ENCODE measurements at regions of chr14 and their contacts with region 1.

Region 1: DNA sequence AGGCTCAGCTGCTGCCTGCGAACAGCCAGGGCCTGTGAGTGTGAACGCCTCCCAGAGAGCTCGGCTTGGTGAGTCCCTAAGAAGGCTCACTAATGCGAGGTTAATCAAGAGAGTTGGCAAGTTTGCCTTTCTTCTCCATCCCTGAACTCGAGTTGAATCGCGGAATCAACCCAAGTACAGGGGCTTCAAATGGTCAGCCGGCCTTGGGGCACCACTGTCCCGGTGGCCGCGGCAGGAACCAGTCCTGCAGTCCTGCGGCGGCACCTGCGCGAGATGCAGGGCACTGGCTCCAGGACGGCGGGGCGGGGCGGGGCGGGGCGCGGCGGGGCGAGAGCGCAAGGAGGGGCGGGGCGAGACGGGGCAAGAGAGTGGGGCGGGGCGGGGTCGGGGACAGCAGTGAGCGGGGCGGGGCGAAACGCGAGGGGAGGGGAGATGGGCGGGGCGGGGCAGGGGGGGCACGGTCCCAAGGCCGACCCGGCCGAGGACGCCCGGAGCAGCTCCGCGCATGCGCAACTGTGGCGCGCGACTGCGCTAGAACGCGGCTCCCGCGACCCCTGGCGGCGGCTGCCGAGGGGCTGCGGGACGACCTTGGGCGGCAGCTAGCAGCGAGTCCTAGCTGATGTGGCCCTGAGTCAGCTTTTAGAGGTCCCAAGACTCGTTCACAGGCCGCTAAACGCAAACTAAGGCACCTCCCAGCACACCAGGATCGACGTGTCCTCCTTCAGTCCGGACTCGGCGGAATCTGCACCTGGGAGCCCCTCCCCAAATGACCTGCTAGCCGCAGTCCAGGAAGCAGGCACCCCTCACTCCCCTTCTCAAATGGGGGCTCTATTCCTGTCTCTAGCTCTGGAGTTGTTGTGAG is 58.0 kb downstream of the TTC7B start:
- DNase-seq: peak; percentile 96
- ATAC-seq: peak; percentile 93

Region 2: GRCh38 chr14:90301668-90302090 is 456.6 kb before region 1 on chr14:
- intact Hi-C with region 1: loop called (anchors 2 kb)
- DNase-seq: no peak
- ATAC-seq: peak; percentile 58

Region 3: DNA sequence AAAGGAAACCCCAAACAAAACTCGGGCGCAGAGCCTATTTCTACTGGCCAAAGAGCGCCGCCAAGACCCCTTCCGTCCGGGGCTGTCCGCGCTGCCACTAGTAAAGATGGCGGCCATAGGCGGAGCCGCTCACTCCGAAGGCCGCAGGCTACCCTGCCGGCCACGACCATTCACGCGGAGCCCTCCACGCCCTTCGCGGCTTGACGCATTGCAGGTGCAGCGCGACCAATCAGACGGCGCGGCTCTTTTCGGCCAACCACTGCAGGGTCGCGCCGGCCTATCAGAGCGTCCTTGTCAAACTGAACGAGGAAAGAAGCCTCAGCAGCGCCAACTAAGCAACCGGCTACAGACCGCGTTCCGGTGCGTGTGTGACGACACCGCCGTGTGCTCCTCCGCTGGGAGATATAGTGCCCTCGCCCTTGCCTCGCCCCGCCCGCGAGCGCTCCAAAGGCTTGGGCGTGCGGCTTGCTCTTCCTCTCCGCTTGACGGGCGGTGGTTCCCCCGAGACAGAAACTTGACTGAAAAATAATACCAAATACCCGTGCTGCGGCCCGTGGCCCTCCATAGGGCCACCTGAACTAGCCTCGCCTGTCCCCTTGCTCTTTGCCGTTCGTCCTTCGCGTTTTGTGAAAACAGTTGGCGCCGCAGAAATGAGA is 375.1 kb before region 1 on chr14:
- intact Hi-C with region 1: loop called (anchors 5 kb)
- DNase-seq: peak; percentile 100
- ATAC-seq: peak; percentile 95

Region 4: DNA sequence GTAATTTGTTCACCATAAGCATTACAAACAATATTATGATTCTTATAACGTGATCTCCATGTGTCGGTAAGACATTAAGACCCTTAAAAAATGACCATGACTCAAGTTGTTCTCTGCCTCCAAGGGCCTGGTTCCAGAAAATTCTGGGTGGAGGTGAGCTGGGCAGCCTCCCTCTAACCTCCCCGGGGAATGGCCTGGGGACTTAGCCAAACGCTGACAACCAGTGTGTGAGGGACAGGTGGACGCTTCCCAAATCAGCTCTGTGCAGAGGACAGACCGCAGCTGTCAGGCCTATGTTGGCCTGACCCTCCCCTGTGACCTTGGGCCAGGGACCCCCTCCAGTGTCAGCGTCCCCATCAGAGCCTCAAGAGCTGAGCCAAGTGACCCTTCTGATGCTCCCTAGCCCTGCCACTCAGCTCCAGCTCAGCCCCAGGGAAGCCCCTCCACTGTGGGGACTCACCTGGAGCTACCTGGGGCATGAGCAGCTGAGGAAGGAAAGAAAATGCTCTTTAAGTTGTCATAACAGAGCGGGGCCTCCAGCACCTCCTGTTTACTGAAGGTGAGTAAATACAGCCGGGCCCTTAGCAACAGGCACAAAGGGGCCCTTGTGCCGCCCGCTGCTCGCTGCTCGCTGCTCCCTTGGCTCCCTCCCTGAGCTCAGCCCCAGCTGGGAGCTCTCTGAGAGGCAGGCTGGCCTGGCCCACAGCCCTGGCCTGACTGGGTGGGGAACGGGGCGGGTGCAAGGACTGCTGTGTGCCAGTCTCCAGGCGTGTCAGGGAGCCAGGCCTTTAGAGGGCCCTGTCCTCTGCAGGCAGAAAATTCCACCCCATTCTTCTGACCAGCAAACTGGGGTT is 244.9 kb before region 1 on chr14:
- intact Hi-C with region 1: loop called (anchors 5 kb)
- DNase-seq: peak; percentile 91
- ATAC-seq: peak; percentile 91

Region 5: GRCh38 chr14:90721619-90722305 is 36.5 kb before region 1 on chr14:
- intact Hi-C with region 1: loop called (anchors 5 kb)
- DNase-seq: no peak
- ATAC-seq: no peak

Region 6: DNA sequence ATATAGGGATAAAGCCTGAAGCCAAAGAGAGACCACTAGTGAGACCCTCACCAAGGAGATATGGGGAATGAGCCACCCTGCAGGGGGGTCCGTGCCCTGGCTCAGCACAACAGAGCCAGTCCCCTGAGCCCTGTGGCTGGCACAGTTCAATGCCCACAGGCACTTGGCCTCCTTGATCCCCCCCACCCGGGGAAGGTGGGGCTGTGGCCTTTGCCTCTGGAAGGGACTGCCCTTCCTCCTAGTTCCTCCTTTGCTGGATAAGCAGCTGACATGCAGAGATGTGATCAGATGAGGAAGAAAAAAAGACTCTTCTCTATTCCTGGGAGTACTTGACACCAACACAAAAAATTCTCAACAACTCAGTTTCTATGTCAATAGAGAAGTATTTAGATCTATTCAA is 38.1 kb after region 1 on chr14:
- intact Hi-C with region 1: no loop called
- DNase-seq: no peak
- ATAC-seq: peak; percentile 50

Region 7: DNA sequence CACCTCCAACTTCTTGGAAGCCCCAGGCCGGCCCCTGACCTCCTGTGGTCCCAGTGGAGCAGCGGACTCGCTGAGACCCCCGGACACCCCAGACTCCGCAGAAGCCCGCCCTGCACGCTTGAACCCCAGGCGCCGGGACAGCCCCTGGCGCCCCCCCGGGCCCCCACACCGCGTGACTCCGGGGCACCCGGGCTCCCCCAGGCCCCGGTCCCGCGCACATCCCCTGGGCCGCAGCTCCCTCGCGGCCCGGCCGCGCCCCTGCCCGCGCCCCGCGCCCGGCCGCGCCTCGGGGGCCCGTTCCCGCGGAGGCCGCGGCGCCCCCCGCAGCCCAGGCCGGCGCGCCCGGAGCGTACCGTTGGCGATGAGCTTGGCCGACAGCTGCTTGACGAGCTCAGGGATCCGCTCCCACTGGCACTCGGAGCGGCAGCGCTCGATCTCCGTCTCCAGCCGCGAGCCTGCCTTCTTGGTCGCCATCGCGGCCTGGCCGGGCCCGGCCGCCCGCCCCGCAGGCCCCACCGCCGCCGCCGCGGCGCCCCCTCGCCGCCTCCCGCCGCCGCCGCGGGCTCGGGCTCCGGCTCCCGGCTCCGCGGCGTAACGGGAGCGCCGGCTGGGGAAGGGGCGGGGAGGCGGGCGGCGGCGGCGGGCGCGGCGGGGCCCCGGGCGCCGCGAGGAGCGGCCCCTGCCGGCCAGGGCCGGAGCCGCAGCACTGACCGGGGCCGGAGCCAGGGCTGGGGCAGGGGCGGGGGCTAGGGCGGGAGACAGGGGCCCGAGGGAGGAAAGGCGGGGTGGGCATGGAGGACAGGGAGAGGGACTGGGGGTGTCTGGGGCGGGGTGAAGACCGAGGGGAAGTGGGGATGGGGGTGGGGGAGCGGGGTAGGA is 57.8 kb after region 1 on chr14 and contains the start of gene TTC7B:
- intact Hi-C with region 1: no loop called
- DNase-seq: peak; percentile 73
- ATAC-seq: peak; percentile 80
- total RNA-seq, gene TTC7B: 67.5 TPM

Region 8: DNA sequence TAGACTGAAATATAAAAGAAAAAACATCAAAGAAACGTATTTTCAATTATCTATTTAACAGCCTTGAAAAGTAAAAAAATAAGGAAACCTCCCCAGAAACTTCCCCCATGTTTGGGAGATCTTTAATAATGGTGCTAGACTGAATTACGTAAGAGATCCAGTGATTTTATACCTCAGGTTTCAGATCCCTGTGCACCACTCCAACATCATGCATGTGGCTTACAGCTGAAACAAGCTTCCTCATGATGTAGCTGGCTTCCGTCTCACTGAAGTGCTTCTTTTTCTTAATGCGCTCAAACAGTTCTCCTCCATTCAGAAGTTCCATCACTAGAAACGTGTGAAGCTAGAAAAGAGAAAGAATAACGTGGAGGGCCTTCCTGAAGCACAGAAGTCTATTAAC is 136.0 kb after region 1 on chr14:
- intact Hi-C with region 1: loop called (anchors 5 kb)
- DNase-seq: no peak
- ATAC-seq: no peak